Activated B cell treated with CpG ODN at 0.5 μM for 24 hours (primary cell): ENCODE measurements at regions of chr1 and their contacts with region 1.

Region 1: GRCh38 chr1:194410756-194411155 is 1224.3 kb upstream of the B3GALT2 start:
- DNase-seq: no peak
- ATAC-seq: no peak
- H3K4me3 Mint-ChIP-seq: no peak overlapping the region
- H3K27ac Mint-ChIP-seq: no peak overlapping the region
- H3K4me1 Mint-ChIP-seq: no peaks in the 10 kb centered on the region
- H3K27me3 Mint-ChIP-seq: no peaks in the 10 kb centered on the region
- CTCF ChIP-seq: no peak

Region 2: DNA sequence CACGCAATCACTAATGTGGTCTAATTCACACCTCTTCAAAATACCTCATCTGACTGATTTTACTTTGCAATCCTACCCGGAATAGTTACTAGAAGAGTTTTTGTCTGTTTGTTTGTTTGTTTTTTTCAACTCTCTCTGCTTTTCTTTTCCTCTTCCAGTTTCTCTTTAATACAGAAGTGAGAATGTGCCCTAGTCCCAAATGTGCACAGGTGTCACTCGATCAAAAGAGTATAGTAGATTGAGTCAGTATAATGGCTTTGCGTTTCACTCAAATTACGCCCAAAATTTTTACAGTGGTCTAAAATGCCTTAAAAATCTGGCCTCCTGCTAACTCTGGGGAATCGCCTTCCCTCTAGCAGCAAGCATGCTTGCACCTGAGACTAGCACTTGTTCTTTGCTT is 660.7 kb after region 1 on chr1:
- CTCF ChIA-PET with region 1: no interaction called
- POLR2A ChIA-PET with region 1: interaction called, 11 read pairs
- intact Hi-C with region 1: no loop called
- DNase-seq: no peak
- ATAC-seq: no peak
- H3K4me3 Mint-ChIP-seq: no peak overlapping the region
- H3K27ac Mint-ChIP-seq: no peak overlapping the region
- H3K4me1 Mint-ChIP-seq: no peaks in the 10 kb centered on the region
- H3K27me3 Mint-ChIP-seq: no peaks in the 10 kb centered on the region
- CTCF ChIP-seq: no peak